CD8-positive, alpha-beta T cell (primary cell): ENCODE measurements at regions of chr6 and their contacts with region 1.

Region 1: GRCh38 chr6:71028236-71028876 is 71.5 kb upstream of the B3GAT2 start:
- DNase-seq: no peak
- ATAC-seq: no peak
- H3K4me3 ChIP-seq: no peak overlapping the region
- H3K4me3 Mint-ChIP-seq: no peak overlapping the region
- H3K27ac ChIP-seq: no peak overlapping the region
- H3K27ac Mint-ChIP-seq: no peak overlapping the region
- H3K4me1 ChIP-seq: no peaks in the 10 kb centered on the region
- H3K4me1 Mint-ChIP-seq: no peaks in the 10 kb centered on the region
- H3K27me3 ChIP-seq: no peaks in the 10 kb centered on the region
- H3K27me3 Mint-ChIP-seq: peaks cover 4% of the 10 kb centered on the region
- CTCF ChIP-seq: no peak

Region 2: GRCh38 chr6:69866770-69867638 is 1161.4 kb before region 1 on chr6:
- CTCF ChIA-PET with region 1: no interaction called
- POLR2A ChIA-PET with region 1: no interaction called
- intact Hi-C with region 1: no loop called
- DNase-seq: peak; percentile 33 to 81 (median 59)
- ATAC-seq: peak; percentile 75
- H3K4me3 ChIP-seq: peak overlapping the region; percentile 48 to 55
- H3K4me3 Mint-ChIP-seq: peak overlapping the region; percentile 81
- H3K27ac ChIP-seq: no peak overlapping the region
- H3K27ac Mint-ChIP-seq: peak overlapping the region; percentile 65
- H3K4me1 ChIP-seq: peaks cover 8% of the 10 kb centered on the region
- H3K4me1 Mint-ChIP-seq: peaks cover 18% of the 10 kb centered on the region
- H3K27me3 ChIP-seq: peaks cover 0 to 2% of the 10 kb centered on the region in 2 experiments
- H3K27me3 Mint-ChIP-seq: peaks cover 18% of the 10 kb centered on the region
- CTCF ChIP-seq: no peak

Region 3: GRCh38 chr6:71045296-71045695 is 16.9 kb after region 1 on chr6:
- CTCF ChIA-PET with region 1: no interaction called
- POLR2A ChIA-PET with region 1: no interaction called
- intact Hi-C with region 1: loop called in 1 of 2 experiments (anchors 1 kb)
- DNase-seq: no peak
- ATAC-seq: no peak
- H3K4me3 ChIP-seq: no peak overlapping the region
- H3K4me3 Mint-ChIP-seq: no peak overlapping the region
- H3K27ac ChIP-seq: no peak overlapping the region
- H3K27ac Mint-ChIP-seq: no peak overlapping the region
- H3K4me1 ChIP-seq: no peaks in the 10 kb centered on the region
- H3K4me1 Mint-ChIP-seq: no peaks in the 10 kb centered on the region
- H3K27me3 ChIP-seq: no peaks in the 10 kb centered on the region
- H3K27me3 Mint-ChIP-seq: no peaks in the 10 kb centered on the region
- CTCF ChIP-seq: no peak

Region 4: GRCh38 chr6:71072508-71072907 is 44.2 kb after region 1 on chr6:
- CTCF ChIA-PET with region 1: no interaction called
- POLR2A ChIA-PET with region 1: no interaction called
- intact Hi-C with region 1: no loop called
- DNase-seq: no peak
- ATAC-seq: no peak
- H3K4me3 ChIP-seq: no peak overlapping the region
- H3K4me3 Mint-ChIP-seq: no peak overlapping the region
- H3K27ac ChIP-seq: no peak overlapping the region
- H3K27ac Mint-ChIP-seq: no peak overlapping the region
- H3K4me1 ChIP-seq: no peaks in the 10 kb centered on the region
- H3K4me1 Mint-ChIP-seq: no peaks in the 10 kb centered on the region
- H3K27me3 ChIP-seq: no peaks in the 10 kb centered on the region
- H3K27me3 Mint-ChIP-seq: peaks cover 15% of the 10 kb centered on the region
- CTCF ChIP-seq: no peak

Region 5: GRCh38 chr6:71482742-71483141 is 454.4 kb after region 1 on chr6:
- CTCF ChIA-PET with region 1: no interaction called
- POLR2A ChIA-PET with region 1: no interaction called
- intact Hi-C with region 1: loop called in 1 of 2 experiments (anchors 5 kb)
- DNase-seq: no peak
- ATAC-seq: no peak
- H3K4me3 ChIP-seq: no peak overlapping the region
- H3K4me3 Mint-ChIP-seq: no peak overlapping the region
- H3K27ac ChIP-seq: no peak overlapping the region
- H3K27ac Mint-ChIP-seq: no peak overlapping the region
- H3K4me1 ChIP-seq: no peaks in the 10 kb centered on the region
- H3K4me1 Mint-ChIP-seq: no peaks in the 10 kb centered on the region
- H3K27me3 ChIP-seq: no peaks in the 10 kb centered on the region
- H3K27me3 Mint-ChIP-seq: peaks cover 1% of the 10 kb centered on the region
- CTCF ChIP-seq: no peak